Ascending aorta (tissue), 2 donors: ENCODE measurements at regions of chrX and their contacts with region 1.

Region 1: GRCh38 chrX:40647307-40648197 is at the start of gene CXorf38:
- DNase-seq: peak; percentile 80 to 96
- H3K4me3 ChIP-seq: peak within 1 kb of the TSS; percentile 77 to 90
- H3K27ac ChIP-seq: peak within 1 kb of the TSS; percentile 75 to 85
- H3K4me1 ChIP-seq: peaks cover 0 to 18% of the 10 kb centered on the region in 2 donors
- H3K27me3 ChIP-seq: no peaks in the 10 kb centered on the region
- CTCF ChIP-seq: no peak
- total RNA-seq, gene CXorf38: 11.9 TPM

Region 2: GRCh38 chrX:40580537-40581335 is 66.8 kb before region 1 on chrX and contains the start of gene ATP6AP2:
- intact Hi-C with region 1: loop called (anchors 1 kb)
- DNase-seq: peak; percentile 78 to 96
- H3K4me3 ChIP-seq: peak within 1 kb of the TSS; percentile 60 to 85
- H3K27ac ChIP-seq: peak within 1 kb of the TSS; percentile 86 to 91
- H3K4me1 ChIP-seq: peaks cover 0 to 8% of the 10 kb centered on the region in 2 donors
- H3K27me3 ChIP-seq: no peaks in the 10 kb centered on the region
- CTCF ChIP-seq: no peak
- total RNA-seq, gene ATP6AP2: 61.9 TPM

Region 3: GRCh38 chrX:40792433-40792832 is 144.9 kb after region 1 on chrX:
- intact Hi-C with region 1: loop called (anchors 1 kb)
- DNase-seq: no peak
- H3K4me3 ChIP-seq: no peak overlapping the region
- H3K27ac ChIP-seq: no peak overlapping the region
- H3K4me1 ChIP-seq: no peaks in the 10 kb centered on the region
- H3K27me3 ChIP-seq: no peaks in the 10 kb centered on the region
- CTCF ChIP-seq: no peak

Region 4: GRCh38 chrX:41116948-41117347 is 469.4 kb after region 1 on chrX:
- intact Hi-C with region 1: loop called (anchors 2 kb)
- DNase-seq: no peak
- H3K4me3 ChIP-seq: no peak overlapping the region
- H3K27ac ChIP-seq: no peak overlapping the region
- H3K4me1 ChIP-seq: peaks cover 0 to 12% of the 10 kb centered on the region in 2 donors
- H3K27me3 ChIP-seq: no peaks in the 10 kb centered on the region
- CTCF ChIP-seq: no peak

Region 5: GRCh38 chrX:41333744-41334259 is 686.2 kb after region 1 on chrX and contains the start of gene DDX3X:
- intact Hi-C with region 1: loop called (anchors 5 kb)
- DNase-seq: peak; percentile 60 to 93
- H3K4me3 ChIP-seq: peak within 1 kb of the TSS; percentile 82 to 99
- H3K27ac ChIP-seq: peak within 1 kb of the TSS; percentile 99 to 100
- H3K4me1 ChIP-seq: peaks cover 0 to 11% of the 10 kb centered on the region in 2 donors
- H3K27me3 ChIP-seq: no peaks in the 10 kb centered on the region
- CTCF ChIP-seq: peak; percentile 28 to 63 (median 47)
- total RNA-seq, gene DDX3X: 89.3 TPM